ENCODE measurements at regions of chr16 and their contacts with region 1.

Region 1: GRCh38 chr16:72501739-72502593 is 330.0 kb upstream of the PMFBP1 start:
- DNase-seq: peak; percentile 16 to 23
- ATAC-seq: peak in 4 of 8 donors; percentile 46 to 79 (median 69)
- H3K4me3 ChIP-seq: no peak overlapping the region
- H3K27ac ChIP-seq: no peak overlapping the region
- H3K4me1 ChIP-seq: no peaks in the 10 kb centered on the region
- H3K27me3 ChIP-seq: no peaks in the 10 kb centered on the region
- CTCF ChIP-seq: peak; percentile 50 to 81 (median 75)

Region 2: DNA sequence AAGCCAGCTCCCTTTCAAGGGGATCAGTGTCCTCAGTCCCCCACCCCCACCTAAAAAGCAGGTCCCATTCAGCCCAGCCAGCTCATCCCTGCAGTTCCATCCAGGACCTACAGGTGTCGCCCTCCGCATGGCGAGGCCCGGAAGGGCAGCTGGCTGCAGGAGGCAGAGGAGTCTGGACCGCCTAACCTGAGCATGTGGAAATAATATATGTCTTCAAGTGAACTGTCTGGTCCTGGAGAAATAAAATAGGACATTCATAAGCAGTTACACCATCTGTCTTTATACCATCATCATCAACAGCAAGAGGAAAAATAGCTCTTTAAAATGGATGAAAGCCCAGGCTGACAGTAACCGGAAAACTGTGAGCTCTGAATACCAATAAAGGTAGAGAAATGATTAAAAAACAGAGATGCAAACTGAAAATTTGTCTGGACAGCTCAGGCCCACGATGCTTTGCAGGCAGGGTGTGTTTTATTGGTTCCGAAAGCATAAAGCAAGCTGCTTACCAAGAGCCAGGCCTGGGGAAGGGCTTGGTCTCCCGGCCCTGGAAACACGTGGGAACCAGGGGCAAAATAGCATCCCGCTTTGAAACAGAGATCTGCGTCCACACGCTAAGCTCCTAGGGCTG is 330.8 kb after region 1 on chr16:
- intact Hi-C with region 1: loop called in 1 of 10 experiments (anchors 10 kb)
- DNase-seq: peak; percentile 81 to 86
- ATAC-seq: peak; percentile 82 to 93 (median 92)
- H3K4me3 ChIP-seq: no peak overlapping the region
- H3K27ac ChIP-seq: peak overlapping the region in 5 of 10 donors; percentile 6 to 45 (median 27)
- H3K4me1 ChIP-seq: peaks cover 0 to 28% (median 11%) of the 10 kb centered on the region in 9 donors
- H3K27me3 ChIP-seq: no peaks in the 10 kb centered on the region
- CTCF ChIP-seq: peak; percentile 90 to 99 (median 95)

Region 3: GRCh38 chr16:73047518-73048291 is 545.7 kb after region 1 on chr16 and contains the start of gene ZFHX3:
- intact Hi-C with region 1: loop called in 1 of 10 experiments (anchors 5 kb)
- DNase-seq: peak; percentile 68 to 76
- ATAC-seq: peak; percentile 66 to 81 (median 72)
- H3K4me3 ChIP-seq: peak within 1 kb of the TSS; percentile 59 to 94 (median 82)
- H3K27ac ChIP-seq: peak within 1 kb of the TSS; percentile 77 to 96 (median 92)
- H3K4me1 ChIP-seq: peaks cover 22 to 89% (median 67%) of the 10 kb centered on the region in 9 donors
- H3K27me3 ChIP-seq: peaks cover 0 to 15% (median 0%) of the 10 kb centered on the region in 7 donors
- CTCF ChIP-seq: peak in 5 of 9 donors; percentile 11 to 57 (median 44)
- total RNA-seq, gene ZFHX3: 7.9 to 15.2 (median 11.7) TPM

Region 4: DNA sequence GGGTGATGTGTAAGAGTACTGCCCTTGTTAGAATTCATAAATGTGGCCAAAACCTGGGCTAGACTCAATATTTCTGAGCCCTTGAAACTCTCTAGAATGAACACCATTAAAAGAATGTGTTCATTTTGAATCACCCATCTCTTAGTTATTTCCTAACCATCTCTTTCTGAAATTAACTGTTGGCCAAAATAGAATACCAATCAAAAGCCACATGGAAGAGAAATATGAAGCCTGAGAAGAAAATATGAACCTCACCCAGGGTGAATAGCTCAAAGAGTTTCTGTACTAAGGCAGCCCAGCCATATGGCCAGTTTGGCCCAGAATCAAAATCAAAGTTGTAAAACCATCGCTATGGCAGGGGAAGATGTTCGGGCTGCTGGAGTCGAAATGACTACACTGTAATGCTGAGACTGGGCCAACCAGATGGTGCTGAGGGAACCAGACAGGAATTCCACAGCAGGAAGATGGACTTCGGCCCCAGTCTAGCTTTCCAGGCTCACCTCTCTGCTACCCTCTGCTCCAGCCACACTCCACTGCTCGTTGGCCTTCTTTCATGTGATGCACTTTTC is 700.3 kb after region 1 on chr16:
- intact Hi-C with region 1: loop called in 6 of 10 experiments (anchors 2 to 10 kb)
- DNase-seq: no peak
- ATAC-seq: peak in 3 of 8 donors; percentile 22 to 76 (median 30)
- H3K4me3 ChIP-seq: no peak overlapping the region
- H3K27ac ChIP-seq: peak overlapping the region in 1 of 10 donors; percentile 0
- H3K4me1 ChIP-seq: no peaks in the 10 kb centered on the region
- H3K27me3 ChIP-seq: peaks cover 0 to 4% (median 0%) of the 10 kb centered on the region in 7 donors
- CTCF ChIP-seq: no peak

Region 5: GRCh38 chr16:73888840-73889490 is 1387.0 kb after region 1 on chr16:
- intact Hi-C with region 1: loop called in 1 of 10 experiments (anchors 10 kb)
- DNase-seq: peak in 1 of 2 donors; percentile 15
- ATAC-seq: peak in 7 of 8 donors; percentile 67 to 95 (median 84)
- H3K4me3 ChIP-seq: peak overlapping the region in 1 of 10 donors; percentile 41
- H3K27ac ChIP-seq: peak overlapping the region in 4 of 10 donors; percentile 18 to 48 (median 21)
- H3K4me1 ChIP-seq: peaks cover 0 to 15% (median 0%) of the 10 kb centered on the region in 9 donors
- H3K27me3 ChIP-seq: peaks cover 0 to 68% (median 53%) of the 10 kb centered on the region in 7 donors
- CTCF ChIP-seq: no peak

Measured in heart right ventricle (tissue), 16 donors.